ENCODE measurements at regions of chr6 and their contacts with region 1.

Region 1: DNA sequence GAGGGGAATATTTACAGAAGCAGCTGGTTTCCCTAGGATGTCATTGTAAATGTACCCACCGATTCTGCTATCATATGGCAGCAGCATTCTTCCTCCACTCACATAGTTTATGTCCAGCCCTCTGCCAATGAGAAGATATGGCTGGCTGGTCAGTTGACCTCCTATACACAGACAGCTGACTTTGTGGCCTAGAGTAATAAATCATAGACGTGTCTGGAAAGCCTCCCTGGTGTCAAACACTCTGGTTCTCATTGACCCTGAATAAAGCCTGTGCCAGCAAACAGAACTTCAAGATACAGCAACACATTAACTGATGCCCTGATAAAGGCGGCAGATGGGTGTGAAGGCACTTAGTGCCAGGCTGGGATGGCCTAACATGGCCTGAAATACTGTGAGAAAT is 52.6 kb downstream of the GPR63 start:
- DNase-seq: no peak
- ATAC-seq: no peak
- H3K4me3 Mint-ChIP-seq: no peak overlapping the region
- H3K27ac Mint-ChIP-seq: no peak overlapping the region
- H3K4me1 Mint-ChIP-seq: peaks cover 20% of the 10 kb centered on the region
- H3K27me3 Mint-ChIP-seq: no peaks in the 10 kb centered on the region; the same call in 1 of the 2 replicates
- CTCF ChIP-seq: no peak

Region 2: GRCh38 chr6:96836631-96837080 is 52.0 kb after region 1 on chr6:
- CTCF ChIA-PET with region 1: no interaction called
- POLR2A ChIA-PET with region 1: interaction called, 11 read pairs
- DNase-seq: no peak
- ATAC-seq: peak; percentile 12
- H3K4me3 Mint-ChIP-seq: peak overlapping the region; percentile 98
- H3K27ac Mint-ChIP-seq: peak overlapping the region; percentile 97
- H3K4me1 Mint-ChIP-seq: peaks cover 35% of the 10 kb centered on the region
- H3K27me3 Mint-ChIP-seq: peaks cover 21% of the 10 kb centered on the region
- CTCF ChIP-seq: no peak

Region 3: DNA sequence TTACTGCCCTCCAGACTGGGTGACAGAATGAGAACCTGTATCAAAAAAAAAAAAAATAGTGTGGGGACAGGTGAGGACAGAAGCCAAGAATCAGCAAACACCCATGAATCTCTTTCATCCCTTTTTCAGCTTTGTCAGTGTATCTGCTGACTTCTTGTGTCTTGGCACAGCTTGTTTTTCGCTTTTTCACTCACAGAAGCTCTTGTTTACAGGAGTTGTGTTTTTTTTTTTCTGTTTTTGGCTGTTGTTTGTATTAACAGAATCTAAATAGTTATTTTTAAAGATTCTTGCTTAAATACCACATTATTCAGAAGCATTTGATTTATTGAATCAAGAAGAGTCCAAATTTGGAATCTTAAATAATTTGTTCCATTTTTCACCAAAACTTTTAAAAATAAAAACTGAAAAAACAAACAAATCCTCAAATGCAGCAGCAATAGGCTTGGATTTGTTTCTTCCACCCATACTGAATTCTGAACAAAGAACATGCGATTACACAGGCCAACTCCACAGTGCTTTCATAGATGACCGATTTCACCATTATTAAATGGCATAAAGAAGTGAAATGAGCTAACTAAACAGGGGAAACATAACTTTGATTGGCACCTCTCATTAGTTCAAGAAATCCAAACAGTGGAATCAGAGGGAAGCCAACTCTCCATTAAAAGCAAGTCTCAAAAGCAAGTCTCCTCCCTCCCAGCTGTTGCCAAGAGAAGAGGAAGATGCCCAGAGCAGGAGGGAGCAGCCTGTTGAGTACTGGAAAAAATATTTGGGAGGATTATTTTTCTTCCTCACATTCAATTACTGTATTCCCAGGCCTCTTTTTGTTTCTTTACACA is 79.8 kb after region 1 on chr6:
- CTCF ChIA-PET with region 1: no interaction called
- POLR2A ChIA-PET with region 1: no interaction called
- DNase-seq: no peak
- ATAC-seq: no peak
- H3K4me3 Mint-ChIP-seq: no peak overlapping the region
- H3K27ac Mint-ChIP-seq: no peak overlapping the region
- H3K4me1 Mint-ChIP-seq: peaks cover 3% of the 10 kb centered on the region; the same call in 1 of the 2 replicates
- H3K27me3 Mint-ChIP-seq: no peaks in the 10 kb centered on the region
- CTCF ChIP-seq: no peak